A673 (cell line): ENCODE measurements at regions of chr17 and their contacts with region 1.

Region 1: GRCh38 chr17:33927732-33928133 is 327.4 kb upstream of the CCL2 start:
- DNase-seq: peak; percentile 0
- H3K4me3 ChIP-seq: no peak overlapping the region
- H3K27ac ChIP-seq: no peak overlapping the region
- H3K4me1 ChIP-seq: no peaks in the 10 kb centered on the region
- H3K27me3 ChIP-seq: no peaks in the 10 kb centered on the region
- CTCF ChIP-seq: peak; percentile 19; the same call in 1 of the 2 replicates

Region 2: GRCh38 chr17:33786478-33786877 is 141.3 kb before region 1 on chr17:
- CTCF ChIA-PET with region 1: no interaction called
- POLR2A ChIA-PET with region 1: no interaction called
- intact Hi-C with region 1: no loop called
- DNase-seq: no peak
- H3K4me3 ChIP-seq: no peak overlapping the region
- H3K27ac ChIP-seq: no peak overlapping the region
- H3K4me1 ChIP-seq: no peaks in the 10 kb centered on the region
- H3K27me3 ChIP-seq: no peaks in the 10 kb centered on the region
- CTCF ChIP-seq: no peak

Region 3: GRCh38 chr17:33858682-33859081 is 69.1 kb before region 1 on chr17:
- CTCF ChIA-PET with region 1: no interaction called
- POLR2A ChIA-PET with region 1: no interaction called
- intact Hi-C with region 1: no loop called
- DNase-seq: no peak
- H3K4me3 ChIP-seq: no peak overlapping the region
- H3K27ac ChIP-seq: no peak overlapping the region
- H3K4me1 ChIP-seq: no peaks in the 10 kb centered on the region
- H3K27me3 ChIP-seq: no peaks in the 10 kb centered on the region
- CTCF ChIP-seq: no peak

Region 4: GRCh38 chr17:34146440-34147043 is 218.8 kb after region 1 on chr17:
- CTCF ChIA-PET with region 1: interaction called, 4 read pairs
- POLR2A ChIA-PET with region 1: no interaction called
- intact Hi-C with region 1: loop called (anchors 2 kb)
- DNase-seq: peak; percentile 18
- H3K4me3 ChIP-seq: no peak overlapping the region
- H3K27ac ChIP-seq: no peak overlapping the region
- H3K4me1 ChIP-seq: no peaks in the 10 kb centered on the region
- H3K27me3 ChIP-seq: no peaks in the 10 kb centered on the region
- CTCF ChIP-seq: peak; percentile 39

Region 5: DNA sequence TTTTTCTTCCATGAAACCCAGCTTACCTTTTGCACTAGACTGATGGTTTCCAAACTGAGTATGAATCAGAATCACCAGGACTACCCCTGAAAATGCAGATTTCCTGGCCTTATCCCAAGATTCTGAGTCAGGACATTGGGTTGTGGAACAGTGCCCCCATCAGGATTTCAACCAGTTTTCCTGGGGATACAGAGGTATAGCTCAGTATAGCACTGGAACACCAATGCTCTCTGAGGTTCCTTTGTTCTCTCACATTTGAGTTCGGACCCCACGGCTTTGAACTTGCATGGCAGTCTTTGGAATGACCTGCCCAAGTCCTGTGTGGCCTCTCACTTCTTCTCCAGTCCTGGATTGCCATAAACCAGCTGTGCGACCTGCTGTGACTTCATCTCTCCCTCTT is 378.7 kb after region 1 on chr17:
- CTCF ChIA-PET with region 1: no interaction called
- POLR2A ChIA-PET with region 1: no interaction called
- intact Hi-C with region 1: no loop called
- DNase-seq: peak; percentile 4
- H3K4me3 ChIP-seq: no peak overlapping the region
- H3K27ac ChIP-seq: no peak overlapping the region
- H3K4me1 ChIP-seq: no peaks in the 10 kb centered on the region
- H3K27me3 ChIP-seq: no peaks in the 10 kb centered on the region
- CTCF ChIP-seq: no peak; the same call in 1 of the 2 replicates